HCT116 (cell line): ENCODE measurements at regions of chr15 and their contacts with region 1.

Region 1: DNA sequence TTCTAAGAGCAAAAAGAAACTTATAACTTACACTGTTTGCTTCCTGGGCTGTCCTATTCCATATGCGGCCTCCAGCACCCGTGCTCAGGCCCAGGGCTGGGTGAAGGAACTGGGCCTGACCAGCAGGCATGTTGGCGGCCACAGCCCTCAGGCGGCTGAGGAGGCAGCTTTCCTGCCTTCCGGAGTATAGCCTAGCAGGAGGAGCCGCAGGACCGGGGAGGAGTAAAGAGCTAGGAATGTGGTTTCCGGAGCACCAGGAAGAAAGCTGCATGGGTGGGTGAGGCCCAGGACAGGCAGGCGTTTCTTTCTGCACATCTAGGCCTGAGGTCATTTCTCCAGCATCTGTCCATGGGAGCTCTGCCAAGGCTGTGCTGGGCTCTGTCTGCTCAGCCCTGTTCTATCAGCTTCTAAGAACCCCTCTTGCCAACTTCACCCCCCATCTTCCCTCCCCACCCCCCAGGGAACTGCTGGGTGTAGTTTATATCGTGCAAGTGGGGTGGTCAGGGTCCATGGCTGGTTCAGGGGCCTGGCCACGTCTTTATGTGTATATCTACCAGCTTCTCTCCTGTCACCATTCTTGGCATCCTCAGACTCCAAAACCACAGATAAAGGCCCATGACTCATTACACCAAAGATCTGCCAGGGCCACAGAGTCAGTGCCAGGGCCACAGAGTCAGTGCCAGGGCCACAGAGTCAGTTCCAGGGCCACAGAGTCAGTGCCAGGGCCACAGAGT is 7.8 kb upstream of the KIF7 start:
- DNase-seq: no peak
- ATAC-seq: 0 out of 2 replicates have a peak, but pooled peaks have one; percentile 29
- H3K4me3 ChIP-seq: no peak overlapping the region
- H3K27ac ChIP-seq: no peak overlapping the region
- H3K4me1 ChIP-seq: peaks cover 0 to 5% of the 10 kb centered on the region in 2 experiments; a peak in 1 of 4 replicates
- H3K27me3 ChIP-seq: no peaks in the 10 kb centered on the region
- CTCF ChIP-seq: no peak
- POLR2A ChIP-seq: no peak
- RAD21 ChIP-seq: no peak

Region 2: DNA sequence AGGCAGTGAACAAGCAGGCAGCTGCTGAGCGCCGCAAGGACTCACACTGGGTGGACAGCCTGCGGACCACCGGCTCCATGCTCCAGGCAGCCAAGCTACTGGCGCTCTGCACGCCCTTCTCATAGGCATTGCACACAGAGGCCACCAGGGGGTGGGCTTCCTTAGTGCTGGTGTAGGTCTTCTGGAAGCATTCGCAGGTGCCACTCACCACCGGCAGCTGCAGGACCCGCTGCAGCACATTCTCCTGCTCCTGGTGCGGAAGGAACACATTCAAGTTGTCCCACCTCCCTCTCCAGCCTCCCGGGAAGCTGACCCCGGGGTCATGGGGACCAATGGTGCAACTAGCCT is 10.1 kb after region 1 on chr15:
- CTCF ChIA-PET with region 1: interaction called, 14 read pairs
- POLR2A ChIA-PET with region 1: no interaction called
- RAD21 ChIA-PET with region 1: no interaction called
- intact Hi-C with region 1: no loop called
- DNase-seq: peak; percentile 12
- ATAC-seq: peak; percentile 92
- H3K4me3 ChIP-seq: no peak overlapping the region
- H3K27ac ChIP-seq: no peak overlapping the region
- H3K4me1 ChIP-seq: no peaks in the 10 kb centered on the region
- H3K27me3 ChIP-seq: no peaks in the 10 kb centered on the region
- CTCF ChIP-seq: peak; percentile 35 to 82 (median 74); a peak in 5 of 6 replicates
- POLR2A ChIP-seq: no peak
- RAD21 ChIP-seq: peak; percentile 52

Region 3: DNA sequence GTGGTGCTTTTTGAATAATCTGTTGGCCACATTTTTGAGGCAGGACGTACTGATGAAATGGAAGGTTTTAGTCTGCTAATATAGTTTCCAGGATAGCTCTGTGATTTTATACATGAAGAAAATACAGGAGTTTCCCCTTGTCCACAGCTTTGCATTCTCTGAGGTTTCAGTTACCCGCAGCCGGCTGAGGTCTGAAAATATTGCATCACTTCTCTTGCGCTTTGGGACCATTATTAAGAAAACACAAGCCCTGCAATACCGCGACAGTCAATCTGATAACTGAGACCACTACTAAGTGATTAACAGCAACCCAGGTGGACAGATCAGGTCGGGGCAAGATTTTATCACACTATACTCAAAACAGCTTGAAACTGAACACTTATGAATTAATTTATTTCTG is 1087.1 kb after region 1 on chr15:
- CTCF ChIA-PET with region 1: no interaction called
- POLR2A ChIA-PET with region 1: no interaction called
- RAD21 ChIA-PET with region 1: no interaction called
- intact Hi-C with region 1: no loop called
- DNase-seq: no peak
- ATAC-seq: no peak
- H3K4me3 ChIP-seq: no peak overlapping the region
- H3K27ac ChIP-seq: no peak overlapping the region
- H3K4me1 ChIP-seq: no peaks in the 10 kb centered on the region
- H3K27me3 ChIP-seq: no peaks in the 10 kb centered on the region
- CTCF ChIP-seq: no peak
- POLR2A ChIP-seq: no peak
- RAD21 ChIP-seq: no peak